Naive thymus-derived CD4-positive, alpha-beta T cell (primary cell): ENCODE measurements at regions of chr16 and their contacts with region 1.

Region 1: DNA sequence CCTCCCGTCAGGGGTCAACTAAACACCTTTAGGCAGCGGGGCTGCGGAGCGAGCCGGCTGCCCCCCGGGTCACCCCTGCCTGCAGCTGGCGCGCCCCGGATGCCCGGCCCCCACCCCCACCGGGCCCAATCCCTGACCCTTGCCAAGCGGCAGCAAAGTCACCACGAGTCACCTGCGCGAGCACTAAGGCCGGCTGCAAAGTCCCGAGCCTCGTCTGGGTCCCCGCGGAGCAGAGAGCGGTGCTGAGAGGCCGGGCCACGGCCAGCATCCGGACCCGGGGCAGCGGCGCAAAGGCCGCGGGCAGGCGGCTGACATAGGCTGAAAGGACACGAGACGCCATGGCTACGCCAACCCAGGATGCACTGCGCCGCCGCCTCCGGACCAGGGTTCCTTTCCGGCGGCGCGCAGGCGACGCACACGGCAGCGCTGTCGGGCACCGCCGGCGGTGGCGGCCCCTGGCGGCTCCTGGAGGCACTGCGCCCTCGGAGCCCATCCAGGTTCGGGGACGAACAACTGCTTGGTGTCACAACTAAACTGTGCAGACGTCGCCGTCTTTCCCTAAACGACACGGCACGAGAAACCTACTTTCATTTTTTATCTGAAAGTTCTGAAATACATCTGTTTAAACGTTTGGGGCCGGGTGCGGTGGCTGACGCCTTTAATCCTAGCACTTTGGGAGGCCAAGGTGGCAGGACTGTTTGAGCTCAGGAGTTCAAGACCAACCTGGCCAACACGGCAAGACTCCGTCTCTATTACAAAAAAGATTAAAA is at the start of gene NDUFAB1:
- DNase-seq: peak; percentile 82 to 97 (median 89)
- ATAC-seq: peak; percentile 100
- H3K4me3 ChIP-seq: peak within 1 kb of the TSS; percentile 82
- H3K4me3 Mint-ChIP-seq: peak within 1 kb of the TSS; percentile 74 to 89 (median 84)
- H3K27ac ChIP-seq: peak within 1 kb of the TSS; percentile 94
- H3K27ac Mint-ChIP-seq: peak within 1 kb of the TSS; percentile 65 to 89 (median 83)
- H3K4me1 ChIP-seq: peaks cover 5 to 13% of the 10 kb centered on the region in 2 donors
- H3K4me1 Mint-ChIP-seq: peaks cover 17 to 48% (median 29%) of the 10 kb centered on the region in 7 donors
- H3K27me3 ChIP-seq: no peaks in the 10 kb centered on the region
- H3K27me3 Mint-ChIP-seq: no peaks in the 10 kb centered on the region
- total RNA-seq, gene NDUFAB1: 24.2 to 85.3 (median 38.2) TPM

Region 2: DNA sequence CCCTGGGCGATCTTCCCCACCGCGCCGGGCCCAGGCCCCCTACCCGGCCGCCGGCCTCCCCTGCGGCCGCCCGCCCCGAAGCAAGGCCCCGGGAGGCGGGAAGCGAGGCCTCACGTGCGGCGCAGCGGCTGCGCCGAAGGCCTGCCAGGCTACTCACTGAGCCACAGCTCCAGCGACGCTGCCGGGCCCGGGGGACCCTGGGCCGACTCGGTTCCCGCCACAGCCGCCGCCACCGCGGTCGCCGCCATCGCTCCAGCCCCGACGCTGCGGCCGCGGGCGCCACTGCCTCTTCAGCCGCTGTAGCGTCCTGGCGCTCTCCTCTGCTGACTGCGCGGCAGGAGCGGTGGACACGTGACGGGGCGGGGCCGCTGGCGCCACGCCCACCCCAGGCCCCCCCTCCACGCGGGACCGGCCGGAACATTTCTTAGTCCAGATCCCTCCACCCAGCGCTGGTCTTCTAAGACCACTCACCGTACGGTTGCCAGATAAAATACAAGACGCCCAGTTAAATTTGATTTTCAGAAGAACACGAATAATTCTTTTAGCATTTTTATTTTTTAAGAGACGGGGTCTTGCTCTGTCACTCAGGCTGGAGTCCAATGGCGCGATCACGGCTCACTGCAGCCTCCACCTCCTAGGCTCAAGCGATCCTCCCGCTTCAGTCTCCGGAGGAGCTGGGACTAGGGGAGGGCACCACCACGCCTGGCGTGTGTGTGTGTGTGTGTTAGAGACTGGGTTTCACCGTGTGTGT is 85.8 kb before region 1 on chr16 and contains the start of gene GGA2:
- CTCF ChIA-PET with region 1: no interaction called
- POLR2A ChIA-PET with region 1: no interaction called
- intact Hi-C with region 1: loop called in 1 of 2 experiments (anchors 1 kb)
- DNase-seq: peak; percentile 61 to 84 (median 74)
- ATAC-seq: peak; percentile 96
- H3K4me3 ChIP-seq: peak within 1 kb of the TSS; percentile 73
- H3K4me3 Mint-ChIP-seq: peak within 1 kb of the TSS; percentile 86 to 99 (median 92)
- H3K27ac ChIP-seq: peak within 1 kb of the TSS; percentile 74
- H3K27ac Mint-ChIP-seq: peak within 1 kb of the TSS; percentile 78 to 94 (median 83)
- H3K4me1 ChIP-seq: peaks cover 36 to 50% of the 10 kb centered on the region in 2 donors
- H3K4me1 Mint-ChIP-seq: peaks cover 43 to 65% (median 56%) of the 10 kb centered on the region in 7 donors
- H3K27me3 ChIP-seq: no peaks in the 10 kb centered on the region
- H3K27me3 Mint-ChIP-seq: no peaks in the 10 kb centered on the region
- total RNA-seq, gene GGA2: 99.3 to 138 (median 104) TPM

Region 3: GRCh38 chr16:23678430-23679273 is 82.5 kb after region 1 on chr16 and contains the start of gene PLK1:
- CTCF ChIA-PET with region 1: no interaction called
- POLR2A ChIA-PET with region 1: no interaction called
- intact Hi-C with region 1: loop called in 1 of 2 experiments (anchors 2 kb)
- DNase-seq: peak; percentile 44 to 85 (median 65)
- ATAC-seq: peak; percentile 96
- H3K4me3 ChIP-seq: peak within 1 kb of the TSS; percentile 80
- H3K4me3 Mint-ChIP-seq: peak within 1 kb of the TSS; percentile 61 to 96 (median 84)
- H3K27ac ChIP-seq: peak within 1 kb of the TSS; percentile 39
- H3K27ac Mint-ChIP-seq: peak within 1 kb of the TSS in 4 of 9 donors; percentile 50 to 73 (median 60)
- H3K4me1 ChIP-seq: peaks cover 9 to 10% of the 10 kb centered on the region in 2 donors
- H3K4me1 Mint-ChIP-seq: peaks cover 10 to 44% (median 23%) of the 10 kb centered on the region in 7 donors
- H3K27me3 ChIP-seq: no peaks in the 10 kb centered on the region
- H3K27me3 Mint-ChIP-seq: peaks cover 0 to 9% (median 0%) of the 10 kb centered on the region in 5 donors
- total RNA-seq, gene PLK1: 0.45 to 65.0 (median 3.2) TPM

Region 4: GRCh38 chr16:23826528-23827045 is 230.5 kb after region 1 on chr16:
- CTCF ChIA-PET with region 1: no interaction called
- POLR2A ChIA-PET with region 1: no interaction called
- intact Hi-C with region 1: no loop called
- DNase-seq: peak in 7 of 9 donors; percentile 48 to 76 (median 62)
- ATAC-seq: peak; percentile 94
- H3K4me3 ChIP-seq: peak overlapping the region; percentile 8
- H3K4me3 Mint-ChIP-seq: peak overlapping the region; percentile 35 to 87 (median 69)
- H3K27ac ChIP-seq: peak overlapping the region; percentile 31
- H3K27ac Mint-ChIP-seq: peak overlapping the region; percentile 54 to 94 (median 88)
- H3K4me1 ChIP-seq: peaks cover 22 to 23% of the 10 kb centered on the region in 2 donors
- H3K4me1 Mint-ChIP-seq: peaks cover 31 to 44% (median 35%) of the 10 kb centered on the region in 7 donors
- H3K27me3 ChIP-seq: no peaks in the 10 kb centered on the region
- H3K27me3 Mint-ChIP-seq: peaks cover 0 to 3% (median 0%) of the 10 kb centered on the region in 5 donors